Tibial artery (tissue), 4 donors: ENCODE measurements at regions of chr7 and their contacts with region 1.

Region 1: GRCh38 chr7:3143869-3144775 is 100.5 kb upstream of the CARD11 start:
- DNase-seq: no peak
- H3K4me3 ChIP-seq: no peak overlapping the region
- H3K27ac ChIP-seq: no peak overlapping the region
- H3K4me1 ChIP-seq: peaks cover 0 to 12% (median 4%) of the 10 kb centered on the region in 4 donors
- H3K27me3 ChIP-seq: no peaks in the 10 kb centered on the region
- CTCF ChIP-seq: no peak

Region 2: DNA sequence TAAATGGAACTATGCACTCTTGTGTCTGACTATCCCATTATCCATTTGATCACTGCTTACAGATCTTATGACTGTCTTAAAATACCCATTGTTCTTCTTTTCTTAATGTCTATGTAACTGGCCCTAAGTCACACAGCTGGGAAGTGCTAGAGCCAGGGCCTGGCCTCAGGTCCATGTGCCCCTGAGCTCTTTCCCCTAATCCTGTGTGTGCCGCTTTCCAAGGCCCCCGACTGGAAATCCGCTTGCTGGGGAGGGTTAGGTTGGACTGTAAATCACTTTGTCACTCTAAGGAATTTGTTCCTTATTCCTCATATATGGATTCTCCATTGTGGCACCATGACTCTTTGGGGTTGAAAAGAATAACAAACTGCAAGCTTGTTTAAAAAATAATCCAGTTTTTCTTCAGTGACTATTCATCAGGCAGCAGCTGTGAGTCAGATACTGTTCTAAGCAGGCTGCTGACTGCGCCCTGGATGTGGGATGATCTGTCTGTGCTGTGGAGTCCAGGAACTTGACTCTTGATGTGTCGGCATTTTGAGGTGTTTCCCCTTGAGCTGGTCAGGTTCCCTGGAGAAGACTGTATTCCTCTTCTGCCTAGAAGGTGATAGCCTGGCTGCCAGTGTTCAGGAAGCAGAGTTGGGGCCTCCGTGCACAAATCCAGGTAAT is 393.2 kb after region 1 on chr7:
- intact Hi-C with region 1: loop called (anchors 5 kb)
- DNase-seq: no peak
- H3K4me3 ChIP-seq: no peak overlapping the region
- H3K27ac ChIP-seq: no peak overlapping the region
- H3K4me1 ChIP-seq: peaks cover 0 to 11% (median 0%) of the 10 kb centered on the region in 4 donors
- H3K27me3 ChIP-seq: no peaks in the 10 kb centered on the region
- CTCF ChIP-seq: no peak